ENCODE measurements at regions of chr12 and their contacts with region 1.

Region 1: GRCh38 chr12:121060149-121061001 is 21.3 kb upstream of the OASL start:
- DNase-seq: peak; percentile 91
- H3K4me3 Mint-ChIP-seq: peak overlapping the region; percentile 81
- H3K27ac Mint-ChIP-seq: peak overlapping the region; percentile 90
- H3K4me1 Mint-ChIP-seq: peaks cover 17% of the 10 kb centered on the region
- H3K27me3 Mint-ChIP-seq: peaks cover 2% of the 10 kb centered on the region

Region 2: DNA sequence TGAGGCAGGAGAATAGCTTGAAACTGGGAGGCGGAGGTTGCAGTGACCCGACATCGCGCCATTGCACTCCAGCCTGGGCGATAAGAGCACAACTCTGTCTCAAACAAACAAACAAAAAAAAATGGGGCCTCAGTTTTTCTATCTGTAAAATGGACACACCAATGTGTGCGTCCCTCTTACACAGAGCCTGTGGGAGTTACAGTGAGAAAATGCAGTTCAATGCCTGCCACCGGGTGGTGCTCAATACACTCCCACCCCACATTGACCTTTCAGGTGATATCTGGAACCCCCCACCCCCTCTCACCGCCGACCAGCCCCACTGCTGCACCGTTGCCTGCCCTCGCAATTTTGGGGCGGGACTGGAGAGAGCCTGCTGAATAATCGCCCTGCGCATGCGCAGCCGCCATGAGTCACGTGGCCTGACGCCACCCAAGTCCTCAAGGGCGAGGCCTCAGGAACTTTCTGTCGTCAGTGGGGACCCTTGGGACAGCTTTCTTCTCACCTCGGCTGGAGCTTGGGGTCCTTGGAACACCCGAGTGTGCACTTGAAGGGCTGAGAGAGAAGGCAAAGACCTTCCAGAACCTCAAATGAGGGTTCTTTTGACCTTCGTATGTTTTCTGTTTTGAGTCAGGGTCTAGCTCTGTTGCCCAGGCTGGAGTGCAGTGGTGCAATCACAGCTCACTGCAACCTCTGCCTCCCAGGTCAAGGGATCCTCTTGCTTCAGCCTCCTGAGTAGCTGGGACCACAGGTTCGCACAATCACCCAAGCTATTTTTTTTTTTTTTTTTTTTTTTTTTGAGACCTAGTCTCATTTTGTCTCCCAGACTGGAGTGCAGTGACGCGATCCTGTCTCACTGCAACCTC is 434.6 kb before region 1 on chr12:
- intact Hi-C with region 1: no loop called
- DNase-seq: peak; percentile 61
- H3K4me3 Mint-ChIP-seq: no peak overlapping the region
- H3K27ac Mint-ChIP-seq: no peak overlapping the region
- H3K4me1 Mint-ChIP-seq: no peaks in the 10 kb centered on the region
- H3K27me3 Mint-ChIP-seq: peaks cover 2% of the 10 kb centered on the region

Region 3: GRCh38 chr12:120971299-120972179 is 88.8 kb before region 1 on chr12:
- intact Hi-C with region 1: no loop called
- DNase-seq: peak; percentile 84
- H3K4me3 Mint-ChIP-seq: no peak overlapping the region
- H3K27ac Mint-ChIP-seq: no peak overlapping the region
- H3K4me1 Mint-ChIP-seq: peaks cover 5% of the 10 kb centered on the region
- H3K27me3 Mint-ChIP-seq: no peaks in the 10 kb centered on the region

Region 4: DNA sequence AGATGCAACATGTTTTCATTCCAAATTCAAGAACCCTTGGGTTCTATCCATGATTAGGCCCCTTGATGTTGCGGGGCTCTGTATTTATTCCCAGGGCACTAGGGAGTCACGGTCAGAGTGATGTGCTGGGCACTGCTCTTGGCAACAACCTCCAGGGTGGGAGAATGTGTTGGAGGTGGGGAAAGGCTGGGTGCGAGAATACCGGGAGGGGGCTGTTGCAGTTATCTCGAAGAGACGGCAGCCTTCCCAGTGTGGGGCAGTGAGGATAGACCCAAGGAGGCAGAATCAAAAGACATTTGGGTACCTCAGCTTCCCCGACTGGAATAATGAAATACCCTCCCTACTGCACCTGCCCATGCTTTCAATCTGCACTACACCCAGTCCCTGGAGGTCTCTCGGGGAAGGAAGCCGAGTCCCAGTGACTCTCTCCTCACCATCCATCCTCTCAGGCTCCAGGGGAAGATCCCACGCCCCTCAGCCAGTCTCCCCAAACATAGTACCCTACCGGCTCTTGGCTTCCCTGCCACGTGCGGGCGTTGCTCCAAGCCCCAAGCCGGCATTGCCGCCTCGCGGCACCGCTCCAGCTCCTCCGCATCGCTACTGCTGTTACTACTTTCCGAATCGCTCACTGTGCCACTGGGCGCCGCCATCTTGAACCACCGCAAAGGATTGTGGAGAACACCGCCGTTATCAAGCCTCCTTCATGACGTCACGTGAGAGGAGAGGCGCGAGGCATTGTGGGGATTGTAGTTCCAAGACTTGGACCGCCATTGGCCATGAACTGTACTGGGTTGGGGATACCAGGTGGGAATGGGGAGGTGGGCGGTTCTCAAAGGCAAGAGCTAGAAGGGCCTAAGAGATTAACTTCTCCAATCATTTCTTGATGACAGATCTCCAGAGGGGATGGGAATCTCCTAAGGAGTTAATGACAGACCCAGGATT is 44.3 kb before region 1 on chr12 and contains the start of gene C12orf43:
- intact Hi-C with region 1: loop called (anchors 5 kb)
- DNase-seq: peak; percentile 98
- H3K4me3 Mint-ChIP-seq: peak within 1 kb of the TSS; percentile 98
- H3K27ac Mint-ChIP-seq: peak within 1 kb of the TSS; percentile 99
- H3K4me1 Mint-ChIP-seq: peaks cover 20% of the 10 kb centered on the region
- H3K27me3 Mint-ChIP-seq: no peaks in the 10 kb centered on the region
- total RNA-seq, gene C12orf43: 32.5 and 35.3 TPM in 2 replicates

Region 5: DNA sequence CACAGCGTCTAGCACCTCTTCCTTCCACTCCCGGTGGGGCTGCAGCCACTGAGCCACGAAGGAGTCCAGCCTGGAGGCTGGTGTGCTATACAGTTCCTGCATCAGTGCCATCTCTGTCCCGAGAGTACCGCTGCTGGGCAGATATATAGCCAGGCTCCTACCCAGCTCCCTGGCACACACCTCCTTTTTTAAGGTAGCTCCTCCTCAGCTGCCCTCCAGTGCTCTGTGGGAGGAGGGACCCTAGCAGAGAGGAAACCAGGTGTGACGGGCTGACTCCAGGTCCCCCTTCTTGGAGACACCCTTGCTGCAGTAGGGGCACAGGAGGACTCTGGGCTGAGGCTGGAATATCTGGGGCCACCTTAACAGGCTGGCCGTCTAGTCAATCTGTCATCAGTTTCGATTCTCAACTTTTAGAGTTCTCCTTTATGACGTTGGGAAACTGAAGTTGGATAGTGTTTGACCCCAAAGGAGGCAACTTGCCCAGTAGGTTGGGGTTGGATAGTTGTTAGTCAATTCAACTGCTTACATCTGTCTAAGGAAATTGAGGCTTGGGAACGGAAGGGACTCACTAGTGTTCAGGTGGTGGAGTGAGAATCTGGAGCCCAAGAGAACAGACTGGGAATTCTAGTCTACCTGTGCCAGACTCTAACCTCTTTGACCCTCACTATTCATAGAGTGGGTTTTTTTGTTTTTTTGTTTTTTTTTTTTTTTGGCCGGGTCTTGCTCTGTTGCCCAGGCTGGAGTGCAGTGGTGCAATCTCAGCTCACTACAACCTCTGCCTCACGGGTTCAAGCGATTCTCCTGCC is 21.3 kb before region 1 on chr12 and contains the start of gene OASL:
- intact Hi-C with region 1: loop called (anchors 1 kb)
- DNase-seq: peak; percentile 89
- H3K4me3 Mint-ChIP-seq: peak within 1 kb of the TSS; percentile 89
- H3K27ac Mint-ChIP-seq: peak within 1 kb of the TSS; percentile 85
- H3K4me1 Mint-ChIP-seq: peaks cover 44% of the 10 kb centered on the region
- H3K27me3 Mint-ChIP-seq: peaks cover 13% of the 10 kb centered on the region
- total RNA-seq, gene OASL: 2.9 and 3.0 TPM in 2 replicates

Region 6: GRCh38 chr12:121079736-121080272 is 19.4 kb after region 1 on chr12:
- intact Hi-C with region 1: no loop called
- DNase-seq: peak; percentile 50
- H3K4me3 Mint-ChIP-seq: no peak overlapping the region
- H3K27ac Mint-ChIP-seq: no peak overlapping the region
- H3K4me1 Mint-ChIP-seq: no peaks in the 10 kb centered on the region
- H3K27me3 Mint-ChIP-seq: peaks cover 17% of the 10 kb centered on the region

Region 7: DNA sequence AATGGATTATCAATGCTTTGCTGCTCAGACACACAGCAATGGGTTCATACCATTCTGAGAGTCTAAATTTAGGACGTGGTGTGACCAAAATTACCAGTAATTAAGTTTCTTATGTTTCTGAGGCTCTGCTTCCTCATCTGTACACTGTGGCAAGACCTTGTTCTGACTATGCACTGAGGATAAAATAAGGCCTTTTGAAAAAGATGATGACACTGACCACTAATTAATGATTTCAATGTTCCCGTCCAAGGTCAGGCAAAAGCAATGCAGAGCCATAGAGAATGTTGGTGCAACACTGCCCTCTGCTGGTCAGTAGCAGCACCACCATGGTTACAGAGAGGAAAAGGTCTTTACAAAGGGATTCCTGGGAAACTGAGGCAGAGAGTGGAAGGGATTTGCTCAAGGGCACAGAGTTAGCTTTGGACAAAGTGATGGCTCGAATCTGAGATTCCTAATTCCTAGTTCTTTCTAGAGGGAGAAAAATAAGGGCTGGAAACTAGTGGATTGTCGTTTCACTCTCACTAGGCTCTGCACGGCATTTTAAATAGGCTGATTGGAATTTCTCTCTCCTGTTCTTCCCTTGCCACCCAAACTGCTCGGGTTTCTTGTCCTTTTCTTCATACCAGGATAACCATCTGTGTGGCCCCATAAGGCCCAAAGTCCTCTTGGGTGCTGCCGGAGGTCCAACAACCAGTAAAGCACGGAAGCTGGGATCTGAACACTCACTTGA is 50.0 kb after region 1 on chr12:
- intact Hi-C with region 1: loop called (anchors 1 kb)
- DNase-seq: peak; percentile 89
- H3K4me3 Mint-ChIP-seq: no peak overlapping the region
- H3K27ac Mint-ChIP-seq: peak overlapping the region; percentile 37
- H3K4me1 Mint-ChIP-seq: peaks cover 6% of the 10 kb centered on the region
- H3K27me3 Mint-ChIP-seq: no peaks in the 10 kb centered on the region

Region 8: GRCh38 chr12:121399391-121400331 is 339.3 kb after region 1 on chr12 and contains the start of gene RNF34:
- intact Hi-C with region 1: loop called (anchors 1 kb)
- DNase-seq: peak; percentile 99
- H3K4me3 Mint-ChIP-seq: peak within 1 kb of the TSS; percentile 95
- H3K27ac Mint-ChIP-seq: peak within 1 kb of the TSS; percentile 98
- H3K4me1 Mint-ChIP-seq: peaks cover 24% of the 10 kb centered on the region
- H3K27me3 Mint-ChIP-seq: no peaks in the 10 kb centered on the region
- total RNA-seq, gene RNF34: 79.5 and 84.1 TPM in 2 replicates